ENCODE measurements at regions of chr19 and their contacts with region 1.

Region 1: DNA sequence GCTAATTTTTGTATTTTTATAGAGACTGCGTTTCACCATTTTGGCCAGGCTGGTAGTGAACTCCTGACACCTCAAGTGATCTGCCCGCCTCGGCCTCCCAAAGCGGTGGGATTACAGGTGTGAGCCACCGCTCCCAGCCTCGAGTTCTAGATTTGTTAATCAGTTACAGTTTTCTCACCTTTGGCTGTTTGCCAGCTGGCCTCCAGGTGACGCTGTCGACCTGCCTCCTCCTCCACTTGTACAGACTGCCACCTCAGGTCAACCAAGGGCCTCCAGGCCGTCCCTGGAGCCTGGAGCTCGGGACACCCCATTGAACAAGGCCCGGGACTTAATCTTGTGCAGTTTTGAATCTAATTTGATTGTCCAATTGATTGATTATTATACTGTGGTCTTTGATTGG is 45.5 kb downstream of the IER2 start:
- DNase-seq: peak; percentile 73
- H3K4me3 Mint-ChIP-seq: no peak overlapping the region
- H3K27ac Mint-ChIP-seq: no peak overlapping the region
- H3K4me1 Mint-ChIP-seq: peaks cover 39% of the 10 kb centered on the region
- H3K27me3 Mint-ChIP-seq: peaks cover 5% of the 10 kb centered on the region

Region 2: DNA sequence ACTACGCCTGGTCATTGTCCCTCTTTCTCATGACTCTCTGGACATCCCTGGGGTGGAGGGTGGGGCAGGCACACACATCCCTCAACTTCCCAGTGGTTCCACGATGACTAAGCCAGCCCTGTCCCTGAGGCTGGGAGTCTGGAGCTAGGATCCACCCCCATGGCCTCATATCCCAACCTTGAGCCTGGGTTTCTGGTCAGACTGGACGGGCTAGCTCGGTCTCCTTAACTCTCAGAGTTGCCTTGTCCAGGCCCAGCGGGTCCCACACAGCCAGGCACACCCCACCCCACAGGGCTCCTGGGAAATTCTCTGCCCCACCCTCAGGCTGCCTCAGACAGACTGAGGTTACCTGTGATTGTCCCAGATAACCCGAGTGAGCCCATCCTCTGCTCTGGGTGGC is 25.9 kb before region 1 on chr19:
- CTCF ChIA-PET with region 1: interaction called, 14 read pairs
- DNase-seq: no peak
- H3K4me3 Mint-ChIP-seq: no peak overlapping the region
- H3K27ac Mint-ChIP-seq: peak overlapping the region; percentile 100
- H3K4me1 Mint-ChIP-seq: peaks cover 89% of the 10 kb centered on the region
- H3K27me3 Mint-ChIP-seq: no peaks in the 10 kb centered on the region

Region 3: DNA sequence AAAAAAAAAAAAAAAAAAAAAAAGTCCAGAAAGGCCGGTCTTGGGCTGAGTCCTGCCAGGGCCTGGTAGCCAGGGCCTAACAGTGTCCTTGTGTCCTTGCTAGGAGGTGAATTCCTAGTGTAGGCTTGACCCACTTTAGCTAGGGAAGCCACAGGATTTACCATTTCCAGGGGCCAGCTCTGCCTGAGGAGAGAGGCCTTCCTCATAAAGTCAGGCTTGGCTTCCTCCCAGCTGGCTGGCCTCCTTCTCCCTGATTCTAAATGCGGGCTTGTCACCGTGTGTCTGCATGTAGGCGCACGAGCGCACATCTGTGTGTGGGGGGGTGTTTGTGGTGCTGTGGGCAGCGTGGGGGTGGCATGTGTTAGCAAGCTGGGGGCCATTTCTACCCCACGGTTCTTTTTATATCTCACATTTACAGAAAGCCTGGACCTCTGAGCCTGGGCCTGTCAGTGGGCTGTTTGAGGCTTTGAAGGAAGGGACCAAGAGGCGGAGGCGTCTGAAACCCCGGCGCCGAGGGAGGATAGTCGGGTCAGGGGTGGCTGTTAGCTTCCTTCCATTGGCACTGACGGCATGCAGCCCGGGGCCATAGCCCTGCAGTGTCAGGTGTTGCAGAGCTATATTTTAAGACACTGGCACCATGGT is 13.8 kb before region 1 on chr19:
- CTCF ChIA-PET with region 1: interaction called, 16 read pairs
- DNase-seq: no peak
- H3K4me3 Mint-ChIP-seq: no peak overlapping the region
- H3K27ac Mint-ChIP-seq: peak overlapping the region; percentile 24
- H3K4me1 Mint-ChIP-seq: peaks cover 39% of the 10 kb centered on the region
- H3K27me3 Mint-ChIP-seq: no peaks in the 10 kb centered on the region

Region 4: DNA sequence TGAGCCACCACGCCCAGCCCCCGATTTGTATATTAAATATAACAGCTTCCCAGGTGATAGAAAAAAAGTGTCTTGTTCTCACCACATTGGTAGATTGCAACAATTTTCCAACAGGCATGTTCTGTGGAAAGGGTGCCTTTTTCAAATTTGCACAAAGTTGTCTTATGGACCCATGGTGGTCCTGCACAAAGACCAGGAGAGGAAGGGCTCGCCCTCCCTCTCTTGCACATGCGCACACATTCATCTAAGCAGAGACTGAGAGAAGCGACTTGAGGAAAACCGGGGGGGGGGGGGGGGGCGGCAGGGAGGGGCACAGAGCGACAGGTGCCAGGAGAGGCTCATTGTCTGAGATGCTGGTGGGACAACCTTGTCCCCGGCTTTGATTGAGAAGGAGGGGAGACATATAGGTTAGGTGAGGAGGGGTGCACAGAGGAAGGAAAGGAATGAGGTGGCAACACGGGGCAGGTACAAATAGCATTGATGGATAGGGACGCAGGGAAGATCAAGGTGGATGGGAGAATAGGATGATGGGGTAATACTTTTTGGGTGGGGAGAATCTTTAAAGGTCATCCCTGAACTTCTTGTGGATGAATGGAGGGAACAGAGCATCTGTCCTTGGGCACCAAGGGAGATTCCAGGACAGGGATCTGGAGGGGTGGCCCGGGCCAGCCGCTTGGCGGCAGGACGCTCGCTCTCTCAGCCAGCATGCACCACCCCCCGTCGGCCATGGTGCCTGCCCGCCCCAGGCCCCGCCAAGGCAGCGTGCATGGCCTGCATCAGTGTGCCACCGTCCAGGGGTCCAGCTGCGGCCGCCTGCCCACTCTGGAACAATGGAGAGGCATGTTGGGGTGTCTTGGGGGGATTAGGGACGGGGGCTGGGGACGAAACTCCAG is 30.5 kb after region 1 on chr19:
- CTCF ChIA-PET with region 1: no interaction called
- DNase-seq: no peak
- H3K4me3 Mint-ChIP-seq: no peak overlapping the region
- H3K27ac Mint-ChIP-seq: no peak overlapping the region
- H3K4me1 Mint-ChIP-seq: peaks cover 2% of the 10 kb centered on the region
- H3K27me3 Mint-ChIP-seq: peaks cover 67% of the 10 kb centered on the region

Region 5: GRCh38 chr19:13252569-13253335 is 57.1 kb after region 1 on chr19:
- CTCF ChIA-PET with region 1: interaction called, 11 read pairs
- DNase-seq: no peak
- H3K4me3 Mint-ChIP-seq: no peak overlapping the region
- H3K27ac Mint-ChIP-seq: no peak overlapping the region
- H3K4me1 Mint-ChIP-seq: peaks cover 2% of the 10 kb centered on the region
- H3K27me3 Mint-ChIP-seq: peaks cover 49% of the 10 kb centered on the region

Region 6: DNA sequence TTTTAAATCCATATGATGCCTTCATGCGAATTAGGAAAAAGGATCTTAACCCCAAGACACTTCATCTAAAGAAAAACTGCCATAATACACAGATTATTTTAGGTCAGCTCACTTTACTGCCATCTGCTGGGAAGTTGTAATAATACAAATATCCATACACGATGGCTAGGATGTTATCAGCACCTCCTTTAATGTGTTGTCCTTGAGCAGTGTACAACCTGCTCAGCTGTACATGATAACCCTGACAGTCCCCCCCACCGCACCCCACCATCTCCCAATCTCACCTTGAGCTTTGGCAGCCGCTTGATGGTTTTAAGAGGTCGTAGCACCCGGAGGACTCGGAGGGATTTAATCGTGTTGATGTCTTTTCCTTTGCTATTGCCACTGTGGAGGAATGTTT is 66.8 kb after region 1 on chr19:
- CTCF ChIA-PET with region 1: interaction called, 54 read pairs
- DNase-seq: no peak
- H3K4me3 Mint-ChIP-seq: no peak overlapping the region
- H3K27ac Mint-ChIP-seq: no peak overlapping the region
- H3K4me1 Mint-ChIP-seq: peaks cover 11% of the 10 kb centered on the region
- H3K27me3 Mint-ChIP-seq: peaks cover 54% of the 10 kb centered on the region

Measured in activated naive CD4-positive, alpha-beta T cell treated with anti-CD3 and anti-CD28 coated beads, Interleukin-2, amount 10 ng/mL, durations not matched to agents 7 days and 5 days (primary cell).